ENCODE measurements at regions of chr20 and their contacts with region 1.

Region 1: GRCh38 chr20:62121776-62122631 is at the start of gene LSM14B:
- ATAC-seq: peak; percentile 67 to 85 (median 80)
- H3K4me3 ChIP-seq: peak within 1 kb of the TSS; percentile 61 to 85 (median 69)
- H3K27ac ChIP-seq: peak within 1 kb of the TSS; percentile 84 to 92
- H3K4me1 ChIP-seq: peaks cover 20 to 24% of the 10 kb centered on the region in 2 donors
- total RNA-seq, gene LSM14B: 27.2 to 79.3 (median 55.4) TPM

Region 2: DNA sequence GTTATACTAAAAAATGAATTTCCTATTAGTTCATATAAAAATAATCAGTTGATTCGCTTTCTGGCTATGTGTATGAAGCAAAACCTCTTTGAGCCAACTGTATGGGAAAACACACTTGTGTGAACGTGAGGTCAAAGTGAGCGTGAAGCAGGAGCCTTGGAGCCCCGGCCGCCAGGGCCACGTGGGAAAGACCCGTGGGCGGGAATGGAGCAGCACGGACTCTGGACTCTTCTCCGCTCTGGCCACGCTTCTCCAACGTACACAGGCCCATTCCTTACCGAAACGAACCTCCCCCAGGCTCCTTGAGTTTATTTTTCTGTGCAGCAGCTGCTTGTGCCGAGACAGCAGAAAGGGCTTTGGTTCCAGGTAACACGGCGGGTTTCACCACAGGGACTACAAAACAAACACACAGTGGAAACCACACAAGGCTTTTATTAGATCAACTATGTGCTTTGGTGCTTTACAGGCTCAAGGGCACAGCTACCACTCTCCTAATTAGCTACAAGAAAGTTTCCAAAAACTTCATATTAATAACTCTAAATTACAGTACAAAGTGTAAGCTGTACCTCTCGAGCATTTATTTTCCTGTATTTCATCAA is 119.0 kb before region 1 on chr20:
- in situ Hi-C with region 1: loop called in 6 of 9 experiments (anchors 10 to 25 kb)
- ATAC-seq: no peak
- H3K4me3 ChIP-seq: no peak overlapping the region
- H3K27ac ChIP-seq: no peak overlapping the region
- H3K4me1 ChIP-seq: no peaks in the 10 kb centered on the region

Measured in motor neuron (in vitro differentiated cells).